Esophagus squamous epithelium (tissue), 5 donors: ENCODE measurements at regions of chr6 and their contacts with region 1.

Region 1: DNA sequence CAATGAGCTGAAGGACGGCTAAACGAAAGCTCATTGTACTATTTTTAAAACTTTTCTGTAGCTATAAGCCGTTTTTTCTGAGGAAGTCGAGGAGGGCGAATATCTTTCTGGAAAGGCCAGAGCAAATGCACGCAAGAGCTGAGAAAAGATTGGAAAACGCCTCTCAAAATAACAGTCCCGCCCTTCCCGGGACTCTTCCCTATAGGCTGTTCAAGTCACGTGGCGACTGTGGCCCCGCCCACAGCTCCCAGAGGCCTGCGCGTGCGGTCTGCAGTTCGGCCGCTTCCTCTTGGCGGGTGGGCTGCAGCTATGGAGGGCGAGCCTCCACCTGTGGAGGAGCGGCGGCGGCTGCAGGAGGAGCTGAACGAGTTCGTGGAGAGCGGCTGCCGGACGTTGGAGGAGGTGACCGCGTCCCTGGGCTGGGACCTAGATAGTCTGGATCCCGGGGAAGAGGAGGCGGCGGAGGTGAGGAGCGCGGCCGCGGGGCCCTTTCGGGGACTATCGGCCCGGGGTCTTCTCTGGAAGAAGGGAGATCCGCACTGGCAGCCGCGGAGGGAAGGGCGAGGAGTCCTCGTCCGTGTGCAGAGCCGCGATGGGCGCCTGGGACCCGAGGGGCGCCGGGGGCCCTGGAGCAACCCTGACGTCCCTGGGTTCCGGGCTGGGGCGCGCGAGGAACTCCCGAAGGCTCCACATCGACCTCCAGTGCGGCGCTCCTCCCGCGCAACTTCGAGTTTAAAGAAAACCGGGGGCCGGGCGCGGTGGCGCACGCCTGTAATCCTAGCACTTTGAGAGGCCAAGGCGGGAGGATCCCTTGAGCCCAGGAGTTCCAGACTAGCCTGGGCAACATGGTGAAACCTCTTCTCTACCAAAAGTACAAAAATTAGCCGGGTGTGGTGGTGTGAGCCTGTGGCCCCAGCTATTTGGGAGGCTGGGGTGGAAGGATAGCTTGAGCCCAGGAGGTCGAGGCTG is at the start of gene SNRNP48:
- DNase-seq: peak; percentile 68
- H3K4me3 ChIP-seq: peak within 1 kb of the TSS; percentile 80 to 99 (median 92)
- H3K27ac ChIP-seq: peak within 1 kb of the TSS; percentile 77 to 84 (median 84)
- H3K4me1 ChIP-seq: peaks cover 0 to 58% (median 15%) of the 10 kb centered on the region in 3 donors
- H3K27me3 ChIP-seq: no peaks in the 10 kb centered on the region
- CTCF ChIP-seq: peak in 2 of 6 experiments; percentile 3 to 5
- POLR2A ChIP-seq: peak in 3 of 4 donors; percentile 42 to 71 (median 62)
- total RNA-seq, gene SNRNP48: 5.3 to 11.6 (median 8.7) TPM

Region 2: GRCh38 chr6:7424967-7425807 is 165.0 kb before region 1 on chr6:
- intact Hi-C with region 1: loop called (anchors 10 kb)
- DNase-seq: no peak
- H3K4me3 ChIP-seq: no peak overlapping the region
- H3K27ac ChIP-seq: no peak overlapping the region
- H3K4me1 ChIP-seq: peaks cover 0 to 33% (median 0%) of the 10 kb centered on the region in 3 donors
- H3K27me3 ChIP-seq: no peaks in the 10 kb centered on the region
- CTCF ChIP-seq: peak in 5 of 6 experiments; percentile 45 to 85 (median 58)
- POLR2A ChIP-seq: no peak